H1 (cell line): ENCODE measurements at regions of chr11 and their contacts with region 1.

Region 1: GRCh38 chr11:61477727-61478148 is 30.8 kb upstream of the LRRC10B start:
- DNase-seq: peak; percentile 47 to 94
- H3K4me3 ChIP-seq: no peak overlapping the region
- H3K27ac ChIP-seq: no peak overlapping the region
- H3K4me1 ChIP-seq: peaks cover 0 to 16% (median 8%) of the 10 kb centered on the region in 4 experiments; a peak in 5 of 7 replicates
- H3K27me3 ChIP-seq: no peaks in the 10 kb centered on the region
- CTCF ChIP-seq: peak; percentile 78 to 97 (median 89)
- EP300 ChIP-seq: no peak
- POLR2A ChIP-seq: no peak
- RAD21 ChIP-seq: peak; percentile 94 to 96

Region 2: GRCh38 chr11:61446211-61446651 is 31.5 kb before region 1 on chr11:
- CTCF ChIA-PET with region 1: interaction called, 34 read pairs
- POLR2A ChIA-PET with region 1: interaction called, 3 read pairs
- DNase-seq: peak; percentile 69 to 88
- H3K4me3 ChIP-seq: no peak overlapping the region
- H3K27ac ChIP-seq: no peak overlapping the region
- H3K4me1 ChIP-seq: peaks cover 0 to 3% (median under 1%) of the 10 kb centered on the region in 4 experiments; a peak in 2 of 7 replicates
- H3K27me3 ChIP-seq: no peaks in the 10 kb centered on the region
- CTCF ChIP-seq: peak; percentile 78 to 97 (median 92)
- EP300 ChIP-seq: no peak
- POLR2A ChIP-seq: no peak
- RAD21 ChIP-seq: peak; percentile 83 to 85

Region 3: GRCh38 chr11:61488651-61489291 is 11.0 kb after region 1 on chr11:
- CTCF ChIA-PET with region 1: interaction called, 85 read pairs
- POLR2A ChIA-PET with region 1: interaction called, 6 read pairs
- DNase-seq: peak in 1 of 2 experiments; percentile 66
- H3K4me3 ChIP-seq: no peak overlapping the region
- H3K27ac ChIP-seq: no peak overlapping the region
- H3K4me1 ChIP-seq: peaks cover 0 to 23% (median 17%) of the 10 kb centered on the region in 4 experiments; a peak in 6 of 7 replicates
- H3K27me3 ChIP-seq: 0 out of 7 replicates have a peak, but pooled peaks cover 0 to 2% (median 0%) of the 10 kb centered on the region in 4 experiments
- CTCF ChIP-seq: no peak
- EP300 ChIP-seq: no peak
- POLR2A ChIP-seq: no peak
- RAD21 ChIP-seq: no peak

Region 4: GRCh38 chr11:61516675-61517572 is 39.2 kb after region 1 on chr11:
- CTCF ChIA-PET with region 1: interaction called, 2,106 read pairs
- POLR2A ChIA-PET with region 1: interaction called, 12 read pairs
- DNase-seq: peak in 1 of 2 experiments; percentile 96
- H3K4me3 ChIP-seq: peak overlapping the region in 1 of 4 experiments; percentile 39; a peak in 1 of 8 replicates
- H3K27ac ChIP-seq: no peak overlapping the region
- H3K4me1 ChIP-seq: peaks cover 0 to 41% (median 27%) of the 10 kb centered on the region in 4 experiments; a peak in 6 of 7 replicates
- H3K27me3 ChIP-seq: no peaks in the 10 kb centered on the region; a peak in 2 of 7 replicates
- CTCF ChIP-seq: peak in 2 of 3 experiments; percentile 98; a peak in 3 of 4 replicates
- EP300 ChIP-seq: no peak
- POLR2A ChIP-seq: no peak
- RAD21 ChIP-seq: peak; percentile 98 to 99

Region 5: DNA sequence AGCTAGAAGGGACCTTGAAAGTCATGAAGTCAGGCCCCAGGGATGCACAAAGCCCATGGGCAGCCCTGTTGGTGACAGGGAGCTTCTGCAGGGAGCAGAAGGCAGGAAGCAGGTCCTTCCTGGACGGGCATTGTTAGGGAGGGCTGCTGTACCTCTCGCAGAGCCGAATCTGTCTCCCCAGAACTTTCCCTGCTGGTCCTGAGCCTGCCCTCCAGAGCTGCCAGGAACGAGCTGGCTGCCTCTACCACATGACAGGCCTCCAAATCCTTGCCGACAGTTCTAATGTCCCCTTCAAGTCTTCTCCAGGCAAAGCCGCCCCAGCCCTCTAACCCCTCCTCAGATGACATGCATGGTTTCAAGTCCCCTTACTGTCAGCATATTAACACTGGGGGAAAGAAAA is 83.0 kb after region 1 on chr11:
- CTCF ChIA-PET with region 1: interaction called, 37 read pairs
- POLR2A ChIA-PET with region 1: no interaction called
- DNase-seq: no peak
- H3K4me3 ChIP-seq: no peak overlapping the region
- H3K27ac ChIP-seq: no peak overlapping the region
- H3K4me1 ChIP-seq: peaks cover 0 to 7% (median 2%) of the 10 kb centered on the region in 4 experiments; a peak in 2 of 7 replicates
- H3K27me3 ChIP-seq: peaks cover 0 to 9% (median 8%) of the 10 kb centered on the region in 4 experiments; a peak in 4 of 7 replicates
- CTCF ChIP-seq: no peak
- EP300 ChIP-seq: no peak
- POLR2A ChIP-seq: no peak
- RAD21 ChIP-seq: no peak